ENCODE measurements at regions of chr10 and their contacts with region 1.

Region 1: GRCh38 chr10:23702977-23703414 is 264.1 kb downstream of the OTUD1 start:
- DNase-seq: peak; percentile 65
- H3K4me3 ChIP-seq: no peak overlapping the region; a peak in 1 of 4 replicates
- H3K27ac ChIP-seq: no peak overlapping the region
- H3K4me1 ChIP-seq: no peaks in the 10 kb centered on the region
- H3K27me3 ChIP-seq: no peaks in the 10 kb centered on the region
- CTCF ChIP-seq: peak; percentile 81
- EP300 ChIP-seq: no peak
- RAD21 ChIP-seq: peak; percentile 74

Region 2: DNA sequence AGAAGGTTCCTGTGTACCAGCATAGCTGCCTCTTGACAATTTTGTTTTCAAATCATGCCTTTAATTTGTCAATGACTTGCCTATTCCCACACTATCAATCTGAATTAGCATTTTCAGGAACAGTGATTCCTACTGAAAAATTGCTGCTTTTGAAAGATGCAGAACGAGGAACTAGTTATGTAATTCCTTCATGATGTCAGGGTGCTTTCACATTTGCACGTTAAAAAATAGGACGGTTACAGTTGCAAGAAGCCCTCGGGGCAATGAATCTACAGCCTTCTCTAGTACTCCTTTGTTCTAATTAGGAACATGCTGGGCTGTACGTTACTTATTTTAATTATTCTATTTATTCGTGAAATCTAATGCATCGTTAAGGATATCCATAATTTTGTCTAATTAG is 10.3 kb before region 1 on chr10:
- CTCF ChIA-PET with region 1: interaction called, 11 read pairs
- POLR2A ChIA-PET with region 1: no interaction called
- DNase-seq: no peak
- H3K4me3 ChIP-seq: no peak overlapping the region
- H3K27ac ChIP-seq: no peak overlapping the region
- H3K4me1 ChIP-seq: no peaks in the 10 kb centered on the region
- H3K27me3 ChIP-seq: peaks cover 34% of the 10 kb centered on the region
- CTCF ChIP-seq: no peak
- EP300 ChIP-seq: no peak
- RAD21 ChIP-seq: no peak

Region 3: DNA sequence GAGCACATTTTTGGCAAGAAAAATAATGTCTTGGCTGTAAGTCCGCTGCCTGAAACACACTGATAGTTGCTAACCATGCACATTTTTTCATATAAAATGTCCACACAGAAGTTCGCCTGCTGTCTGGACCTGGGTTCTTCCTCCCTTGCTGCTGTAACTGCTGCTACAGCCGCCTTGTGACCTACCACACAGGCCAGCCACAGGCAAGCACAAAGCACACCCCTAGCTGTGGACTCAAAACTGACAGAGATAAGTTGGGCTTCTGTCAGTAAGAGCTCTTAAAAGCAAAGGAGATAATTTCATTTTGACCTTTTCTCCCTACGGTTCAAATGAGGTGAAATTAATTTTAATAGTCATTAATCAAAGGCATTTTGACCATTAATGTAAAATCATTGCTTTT is 90.6 kb after region 1 on chr10:
- CTCF ChIA-PET with region 1: no interaction called
- POLR2A ChIA-PET with region 1: no interaction called
- DNase-seq: no peak
- H3K4me3 ChIP-seq: no peak overlapping the region
- H3K27ac ChIP-seq: no peak overlapping the region
- H3K4me1 ChIP-seq: peaks cover 0 to 7% of the 10 kb centered on the region in 2 experiments; a peak in 1 of 4 replicates
- H3K27me3 ChIP-seq: no peaks in the 10 kb centered on the region
- CTCF ChIP-seq: no peak
- EP300 ChIP-seq: no peak
- RAD21 ChIP-seq: no peak

Measured in SK-N-SH (cell line).